Activated CD4-positive, alpha-beta memory T cell treated with anti-CD3 and anti-CD28 coated beads for 36 hours (primary cell): ENCODE measurements at regions of chr12 and their contacts with region 1.

Region 1: DNA sequence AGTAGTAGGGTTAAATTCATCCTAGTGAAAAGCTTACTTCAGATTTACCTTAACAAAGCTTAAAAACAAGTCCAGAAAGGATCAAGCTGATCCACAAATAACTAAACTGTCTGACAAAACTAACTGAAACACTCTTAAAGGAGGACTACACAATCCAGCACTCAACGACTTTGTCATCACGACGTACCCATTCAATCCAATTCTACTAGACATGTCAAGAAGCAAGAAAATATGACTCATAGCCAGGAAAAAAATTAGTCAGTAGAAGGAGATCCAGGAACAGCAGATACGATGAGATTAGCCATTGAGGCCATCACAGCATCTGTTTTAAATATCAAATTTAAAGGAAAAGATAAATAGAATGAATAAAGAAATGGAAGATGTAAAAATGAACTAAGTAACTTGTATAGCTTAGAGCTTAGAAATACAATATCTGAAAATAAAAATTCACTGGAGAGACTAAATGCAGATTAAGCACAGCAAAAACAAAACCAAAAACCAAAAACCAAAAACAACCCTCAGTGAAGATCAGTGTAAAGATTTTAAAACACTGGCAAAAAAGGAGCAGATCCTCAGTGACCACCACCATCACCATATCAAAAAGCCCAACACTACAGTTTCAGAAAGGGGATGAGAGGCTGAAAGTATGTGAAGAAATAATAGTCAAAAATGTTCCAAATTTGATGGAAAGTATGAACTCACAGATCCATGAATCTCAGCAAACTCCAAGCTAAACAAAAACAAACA is 95.0 kb upstream of the CCND2 start:
- DNase-seq: peak; percentile 39
- H3K4me3 Mint-ChIP-seq: peak overlapping the region; percentile 27
- H3K27ac Mint-ChIP-seq: peak overlapping the region; percentile 76
- H3K4me1 Mint-ChIP-seq: peaks cover 20% of the 10 kb centered on the region
- H3K27me3 Mint-ChIP-seq: peaks cover 2% of the 10 kb centered on the region

Region 2: GRCh38 chr12:3732902-3733301 is 445.7 kb before region 1 on chr12:
- CTCF ChIA-PET with region 1: no interaction called
- POLR2A ChIA-PET with region 1: no interaction called
- intact Hi-C with region 1: no loop called
- DNase-seq: no peak
- H3K4me3 Mint-ChIP-seq: no peak overlapping the region
- H3K27ac Mint-ChIP-seq: no peak overlapping the region
- H3K4me1 Mint-ChIP-seq: peaks cover 24% of the 10 kb centered on the region
- H3K27me3 Mint-ChIP-seq: no peaks in the 10 kb centered on the region

Region 3: DNA sequence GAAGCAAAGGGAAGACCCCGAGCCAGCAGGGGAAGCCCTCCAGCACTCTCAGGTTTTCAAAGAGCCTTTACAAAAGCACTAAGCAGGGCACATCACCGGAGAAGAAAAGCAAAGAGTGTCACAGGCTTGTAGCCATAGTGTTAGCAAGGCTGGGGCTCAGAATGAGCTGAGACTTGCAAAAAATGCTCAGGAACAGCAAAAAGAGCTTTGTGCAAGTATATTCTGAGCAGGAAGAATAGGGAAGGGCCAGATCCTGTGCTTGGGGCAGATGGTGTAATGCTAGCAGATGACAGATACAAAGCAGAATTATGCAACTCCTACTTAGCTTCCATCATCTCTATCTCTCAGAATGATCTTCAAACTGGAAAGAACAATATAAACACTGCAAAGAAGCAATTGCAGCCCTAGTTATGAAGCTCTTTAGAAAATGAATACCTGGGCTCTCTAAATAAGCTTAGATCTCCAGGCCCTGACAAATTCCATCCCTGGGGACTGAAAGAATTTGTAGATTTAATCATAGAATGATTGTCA is 281.7 kb before region 1 on chr12:
- CTCF ChIA-PET with region 1: no interaction called
- POLR2A ChIA-PET with region 1: no interaction called
- intact Hi-C with region 1: no loop called
- DNase-seq: no peak
- H3K4me3 Mint-ChIP-seq: peak overlapping the region; percentile 16
- H3K27ac Mint-ChIP-seq: peak overlapping the region; percentile 89
- H3K4me1 Mint-ChIP-seq: peaks cover 41% of the 10 kb centered on the region
- H3K27me3 Mint-ChIP-seq: no peaks in the 10 kb centered on the region

Region 4: DNA sequence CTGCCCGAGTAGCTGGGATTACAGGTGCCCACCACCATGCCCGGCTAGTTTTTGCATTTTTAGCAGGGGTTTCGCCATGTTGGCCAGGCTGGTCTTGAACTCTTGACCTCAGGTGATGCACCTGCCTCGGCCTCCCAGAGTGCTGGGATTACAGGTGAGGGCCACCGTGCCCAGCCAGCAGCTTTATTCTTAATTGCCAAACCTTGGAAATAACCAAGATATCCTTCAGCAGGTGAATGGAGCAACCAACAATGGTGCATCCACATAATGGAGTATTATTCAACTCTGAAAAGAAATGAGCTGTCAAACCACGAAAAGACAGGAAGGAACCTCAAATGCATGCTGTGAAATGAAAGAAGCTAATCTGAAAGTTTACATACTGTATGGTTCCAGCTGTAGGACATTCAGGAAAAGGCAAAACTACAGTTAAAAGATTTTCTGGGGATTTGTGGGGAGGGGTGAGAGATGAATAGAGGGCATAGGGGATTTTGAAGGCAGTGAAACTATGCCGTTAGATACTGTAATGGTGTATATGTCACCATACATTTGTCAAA is 23.8 kb before region 1 on chr12:
- CTCF ChIA-PET with region 1: interaction called, 3 read pairs
- POLR2A ChIA-PET with region 1: no interaction called
- intact Hi-C with region 1: loop called (anchors 1 kb)
- DNase-seq: peak; percentile 8
- H3K4me3 Mint-ChIP-seq: no peak overlapping the region
- H3K27ac Mint-ChIP-seq: peak overlapping the region; percentile 90
- H3K4me1 Mint-ChIP-seq: peaks cover 76% of the 10 kb centered on the region
- H3K27me3 Mint-ChIP-seq: no peaks in the 10 kb centered on the region

Region 5: DNA sequence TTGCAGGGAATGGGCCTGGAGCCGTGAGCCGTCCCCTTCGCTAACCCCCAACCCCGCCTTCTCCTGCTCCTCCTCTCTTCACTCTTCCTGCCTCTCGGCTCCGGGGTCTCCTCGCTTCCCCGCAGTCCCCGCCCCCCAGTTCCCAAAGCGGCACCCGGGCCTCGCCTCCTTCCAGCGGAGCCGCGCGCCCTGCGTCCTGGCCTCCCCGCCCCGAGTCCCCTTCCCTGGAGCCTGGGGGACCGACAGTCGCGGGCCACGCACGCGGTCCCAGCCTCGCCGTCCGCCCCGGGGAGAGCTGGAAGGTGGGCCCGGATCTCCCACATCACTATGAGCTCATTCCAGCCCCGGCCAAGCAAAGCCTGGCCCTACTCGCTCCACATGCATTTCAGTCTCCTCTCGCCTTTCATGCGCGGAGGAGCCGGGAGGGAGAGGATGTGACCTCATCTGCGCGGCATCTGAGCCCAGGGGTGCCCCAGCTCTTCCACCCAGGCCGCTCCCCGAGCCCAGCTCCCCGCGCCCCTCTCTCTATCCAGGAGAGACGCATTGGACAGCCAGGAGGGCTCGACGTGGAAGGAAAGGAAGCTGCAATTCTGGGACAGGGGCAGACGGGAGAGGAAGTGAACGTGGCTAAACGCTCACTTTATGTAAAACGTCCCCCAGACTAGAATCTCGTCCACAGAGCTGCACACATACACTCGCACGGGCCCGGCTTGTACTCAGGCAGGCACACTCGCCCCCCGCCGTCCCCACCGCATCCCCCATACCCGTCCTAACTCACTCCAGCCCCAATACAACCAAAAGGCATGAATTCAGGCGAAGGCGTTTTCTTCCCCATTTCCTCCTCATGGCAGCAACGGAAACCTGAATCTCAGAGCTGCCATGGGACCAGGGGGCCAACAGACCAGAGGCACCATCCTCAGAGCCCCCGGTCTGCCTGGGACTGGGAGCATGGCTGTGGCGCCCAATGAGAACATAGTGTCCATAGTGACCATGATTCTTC is 13.7 kb before region 1 on chr12:
- CTCF ChIA-PET with region 1: interaction called, 3 read pairs
- POLR2A ChIA-PET with region 1: interaction called, 14 read pairs
- intact Hi-C with region 1: loop called (anchors 1 kb)
- DNase-seq: peak; percentile 78
- H3K4me3 Mint-ChIP-seq: peak overlapping the region; percentile 79
- H3K27ac Mint-ChIP-seq: peak overlapping the region; percentile 90
- H3K4me1 Mint-ChIP-seq: peaks cover 49% of the 10 kb centered on the region
- H3K27me3 Mint-ChIP-seq: no peaks in the 10 kb centered on the region

Region 6: GRCh38 chr12:4215229-4216186 is 36.9 kb after region 1 on chr12:
- CTCF ChIA-PET with region 1: no interaction called
- POLR2A ChIA-PET with region 1: interaction called, 7 read pairs
- intact Hi-C with region 1: loop called (anchors 1 kb)
- DNase-seq: peak; percentile 70
- H3K4me3 Mint-ChIP-seq: peak overlapping the region; percentile 59
- H3K27ac Mint-ChIP-seq: peak overlapping the region; percentile 86
- H3K4me1 Mint-ChIP-seq: peaks cover 36% of the 10 kb centered on the region
- H3K27me3 Mint-ChIP-seq: no peaks in the 10 kb centered on the region

Region 7: GRCh38 chr12:4307593-4308333 is 129.2 kb after region 1 on chr12:
- CTCF ChIA-PET with region 1: no interaction called
- POLR2A ChIA-PET with region 1: no interaction called
- intact Hi-C with region 1: no loop called
- DNase-seq: no peak
- H3K4me3 Mint-ChIP-seq: no peak overlapping the region
- H3K27ac Mint-ChIP-seq: peak overlapping the region; percentile 14
- H3K4me1 Mint-ChIP-seq: peaks cover 2% of the 10 kb centered on the region
- H3K27me3 Mint-ChIP-seq: no peaks in the 10 kb centered on the region